Vagina (tissue), 2 donors: ENCODE measurements at regions of chr19 and their contacts with region 1.

Region 1: DNA sequence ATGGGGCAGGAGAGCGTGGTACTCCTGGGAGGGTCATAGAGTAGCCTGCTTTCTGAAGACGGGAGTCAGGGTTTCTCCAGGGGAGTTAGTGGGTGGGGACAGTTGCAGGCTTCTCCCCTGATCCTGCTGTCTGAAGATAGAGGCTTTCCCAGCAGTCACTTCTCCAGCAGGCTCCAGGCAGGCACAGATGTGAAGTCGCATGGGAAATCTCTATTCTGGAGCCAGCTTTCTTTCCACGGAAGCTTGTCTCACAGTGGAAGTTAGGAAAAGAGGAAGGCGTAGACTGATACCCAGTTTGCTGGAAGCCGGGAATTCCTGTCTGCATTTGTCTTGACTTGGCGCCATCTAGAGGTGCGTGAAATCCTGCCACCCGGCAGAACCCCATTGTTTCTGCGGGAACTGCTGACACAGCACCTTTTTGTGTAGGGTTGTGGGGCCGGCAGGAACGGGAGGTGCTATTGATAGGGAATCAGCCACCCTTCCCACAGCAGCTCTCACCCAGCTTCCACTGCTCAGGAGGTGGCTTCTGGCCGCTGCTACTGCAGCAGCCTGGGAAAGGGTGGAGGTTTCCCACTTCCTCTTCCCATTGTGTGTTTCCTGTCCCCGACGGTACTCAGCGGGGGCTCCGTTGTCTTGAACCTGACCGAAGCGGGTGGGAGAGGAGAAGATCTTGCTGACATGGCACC is 28.5 kb upstream of the NPAS1 start:
- DNase-seq: peak in 1 of 2 donors; percentile 94
- H3K4me3 ChIP-seq: no peak overlapping the region
- H3K27ac ChIP-seq: peak overlapping the region; percentile 73
- H3K4me1 ChIP-seq: peaks cover 17% of the 10 kb centered on the region
- H3K27me3 ChIP-seq: no peaks in the 10 kb centered on the region
- CTCF ChIP-seq: peak; percentile 70 to 94 (median 82)
- POLR2A ChIP-seq: no peak

Region 2: DNA sequence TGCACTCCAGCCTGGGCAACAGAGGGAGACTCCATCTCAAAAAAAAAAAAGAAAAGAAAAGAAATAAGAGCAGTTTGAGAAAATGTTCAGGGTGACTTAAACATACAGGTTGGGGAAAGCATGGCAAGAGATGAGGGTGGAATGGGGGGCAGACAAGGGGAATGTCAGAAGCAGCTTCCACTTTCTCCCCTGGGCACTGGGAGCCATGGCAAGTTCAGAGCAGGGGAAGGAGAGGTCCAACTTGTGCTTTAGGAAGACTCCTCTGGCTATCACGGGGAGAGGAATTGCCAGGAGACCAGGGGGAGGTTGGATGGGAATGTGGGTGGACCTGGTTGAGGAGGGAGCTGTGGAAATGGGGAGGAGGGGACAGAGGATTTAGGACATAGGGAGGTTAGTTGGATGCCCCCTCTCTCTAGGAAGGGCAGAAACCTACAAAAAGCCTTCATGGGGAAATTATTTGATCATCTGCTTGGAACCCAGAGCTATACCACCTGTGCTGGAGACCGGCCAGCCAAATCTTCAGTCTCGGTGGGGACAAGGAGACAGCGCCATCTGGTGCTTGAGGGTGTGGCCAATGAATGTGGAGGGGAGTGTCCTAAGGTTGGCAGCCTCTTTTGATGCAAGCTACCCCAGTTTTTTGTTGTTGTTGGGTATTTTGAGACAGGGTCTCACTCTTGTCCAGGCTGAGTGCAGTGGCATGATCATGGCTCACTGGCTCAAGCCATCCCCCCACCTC is 237.5 kb before region 1 on chr19:
- intact Hi-C with region 1: loop called (anchors 10 kb)
- DNase-seq: no peak
- H3K4me3 ChIP-seq: no peak overlapping the region
- H3K27ac ChIP-seq: no peak overlapping the region
- H3K4me1 ChIP-seq: peaks cover 22% of the 10 kb centered on the region
- H3K27me3 ChIP-seq: no peaks in the 10 kb centered on the region
- CTCF ChIP-seq: peak in 1 of 3 experiments; percentile 14
- POLR2A ChIP-seq: no peak

Region 3: DNA sequence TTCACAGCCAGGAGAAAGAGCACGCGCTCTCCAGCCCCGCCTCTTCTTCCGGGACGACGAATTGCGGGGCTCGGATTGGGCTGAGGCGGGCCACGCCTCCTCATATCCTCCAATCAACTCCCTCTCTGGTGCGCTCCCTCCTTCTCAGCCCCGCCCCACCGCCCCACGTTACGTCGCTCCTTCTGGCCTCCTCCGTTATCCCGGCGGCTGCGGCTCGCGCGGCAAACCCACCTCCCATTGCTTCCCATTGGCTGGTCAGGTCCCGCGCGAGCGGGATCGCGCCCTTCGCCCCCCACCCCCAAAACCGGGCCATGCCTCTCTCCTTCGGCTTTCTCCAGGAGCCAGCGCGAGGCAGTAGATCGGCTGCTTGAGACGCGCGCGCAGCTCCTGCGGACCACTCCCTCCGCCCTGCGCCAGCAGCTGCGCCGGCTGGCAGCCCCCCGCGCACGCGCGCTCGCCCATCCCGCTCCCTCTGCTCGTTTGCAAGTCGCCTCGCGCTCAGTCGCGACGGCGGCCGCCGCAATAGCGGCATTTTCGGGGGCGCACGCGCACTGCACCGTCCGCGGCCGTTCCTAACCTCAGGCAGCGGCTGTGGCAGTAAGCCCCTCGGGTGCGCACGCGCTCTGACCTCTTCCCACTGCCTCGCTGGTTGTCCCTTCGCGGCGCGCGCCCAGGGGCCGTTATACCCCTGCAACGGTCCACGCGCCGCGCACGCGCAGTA is 130.8 kb before region 1 on chr19:
- intact Hi-C with region 1: loop called (anchors 5 kb)
- DNase-seq: peak in 1 of 2 donors; percentile 98
- H3K4me3 ChIP-seq: peak overlapping the region; percentile 61 to 79
- H3K27ac ChIP-seq: peak overlapping the region; percentile 96
- H3K4me1 ChIP-seq: peaks cover 59% of the 10 kb centered on the region
- H3K27me3 ChIP-seq: no peaks in the 10 kb centered on the region
- CTCF ChIP-seq: no peak
- POLR2A ChIP-seq: peak in 1 of 2 donors; percentile 28